ENCODE measurements at regions of chr1 and their contacts with region 1.

Region 1: DNA sequence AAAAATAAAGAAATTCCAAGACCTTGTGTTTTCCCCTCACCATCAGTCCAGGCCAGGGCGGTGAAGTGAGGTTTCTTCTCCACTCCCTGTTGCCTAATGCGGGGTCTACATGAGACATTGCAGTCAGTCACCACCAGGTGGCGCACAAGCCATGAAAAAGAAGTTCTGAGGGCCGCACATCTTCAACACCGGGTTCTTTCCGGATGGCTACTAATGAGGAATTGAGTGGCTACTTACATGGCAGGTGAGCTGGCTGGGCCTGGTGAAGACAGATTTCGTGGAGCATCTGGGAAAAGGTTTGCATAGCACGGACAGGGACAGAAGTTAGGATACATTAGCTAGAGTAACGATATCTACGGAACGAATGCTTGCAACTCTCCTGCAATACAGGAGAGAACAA is 15.8 kb upstream of the S100A11 start:
- DNase-seq: peak; percentile 89
- H3K4me3 ChIP-seq: no peak overlapping the region
- H3K27ac ChIP-seq: no peak overlapping the region
- H3K4me1 ChIP-seq: no peaks in the 10 kb centered on the region
- H3K27me3 ChIP-seq: no peaks in the 10 kb centered on the region
- CTCF ChIP-seq: peak; percentile 92

Region 2: GRCh38 chr1:152347116-152347728 is 294.6 kb after region 1 on chr1:
- intact Hi-C with region 1: loop called (anchors 10 kb)
- DNase-seq: peak; percentile 53
- H3K4me3 ChIP-seq: no peak overlapping the region
- H3K27ac ChIP-seq: no peak overlapping the region
- H3K4me1 ChIP-seq: no peaks in the 10 kb centered on the region
- H3K27me3 ChIP-seq: no peaks in the 10 kb centered on the region
- CTCF ChIP-seq: peak; percentile 78

Region 3: DNA sequence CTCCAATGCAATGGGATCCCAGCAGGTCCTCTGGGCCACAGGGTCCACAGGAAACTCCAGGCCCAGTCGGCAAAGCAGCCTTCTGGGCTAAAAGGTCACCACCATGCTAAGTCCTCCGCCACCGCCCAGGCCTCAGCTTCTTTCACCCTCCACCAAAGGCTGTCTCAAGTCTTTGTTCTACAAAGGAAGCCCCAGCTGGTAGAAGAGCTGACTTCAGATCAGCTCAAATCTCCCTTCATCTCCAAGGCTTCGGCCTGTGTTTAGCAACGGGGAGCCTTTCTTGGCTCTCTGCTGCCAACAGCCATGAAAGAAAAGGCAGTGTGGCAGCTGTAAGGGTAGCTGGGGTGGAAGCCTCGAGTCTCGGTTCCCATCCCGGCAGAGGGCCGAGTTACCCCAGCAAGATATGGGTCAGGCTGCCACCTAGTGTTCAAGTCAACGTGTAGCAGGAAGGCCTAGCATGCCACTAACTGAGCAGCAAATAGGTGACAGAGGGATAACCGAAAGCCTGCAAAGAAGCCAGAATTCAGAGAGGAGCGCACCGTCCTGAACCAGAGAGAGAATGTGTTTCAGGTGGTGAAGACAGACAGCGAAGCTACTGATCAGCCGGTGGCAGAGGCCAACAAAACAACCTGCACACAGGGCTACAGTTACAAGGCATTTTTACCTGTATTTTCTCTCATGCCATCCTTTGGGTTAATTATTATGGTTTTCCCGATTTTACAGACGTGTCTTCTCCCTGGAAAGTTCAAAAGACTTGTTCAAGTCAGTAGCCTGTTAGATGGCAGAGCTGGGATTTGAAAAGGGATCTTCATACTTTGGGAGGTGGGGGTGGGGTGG is 388.2 kb after region 1 on chr1:
- intact Hi-C with region 1: no loop called
- DNase-seq: peak; percentile 61
- H3K4me3 ChIP-seq: no peak overlapping the region
- H3K27ac ChIP-seq: no peak overlapping the region
- H3K4me1 ChIP-seq: no peaks in the 10 kb centered on the region
- H3K27me3 ChIP-seq: no peaks in the 10 kb centered on the region
- CTCF ChIP-seq: peak; percentile 73

Region 4: GRCh38 chr1:152459596-152460528 is 407.3 kb after region 1 on chr1:
- intact Hi-C with region 1: loop called (anchors 5 kb)
- DNase-seq: peak; percentile 69
- H3K4me3 ChIP-seq: no peak overlapping the region
- H3K27ac ChIP-seq: no peak overlapping the region
- H3K4me1 ChIP-seq: no peaks in the 10 kb centered on the region
- H3K27me3 ChIP-seq: no peaks in the 10 kb centered on the region
- CTCF ChIP-seq: peak; percentile 69